Stomach (tissue), 19 donors: ENCODE measurements at regions of chr19 and their contacts with region 1.

Region 1: GRCh38 chr19:14198384-14199376 is 7.3 kb downstream of the ADGRL1 start:
- DNase-seq: no peak
- H3K4me3 ChIP-seq: no peak overlapping the region
- H3K27ac ChIP-seq: no peak overlapping the region
- H3K4me1 ChIP-seq: peaks cover 0 to 42% (median 21%) of the 10 kb centered on the region in 4 donors
- H3K27me3 ChIP-seq: no peaks in the 10 kb centered on the region
- CTCF ChIP-seq: no peak
- EP300 ChIP-seq: no peak
- POLR2A ChIP-seq: no peak

Region 2: GRCh38 chr19:14277608-14278007 is 78.9 kb after region 1 on chr19:
- intact Hi-C with region 1: no loop called
- DNase-seq: no peak
- H3K4me3 ChIP-seq: no peak overlapping the region
- H3K27ac ChIP-seq: no peak overlapping the region
- H3K4me1 ChIP-seq: no peaks in the 10 kb centered on the region
- H3K27me3 ChIP-seq: peaks cover 0 to 39% (median 5%) of the 10 kb centered on the region in 3 donors
- CTCF ChIP-seq: no peak
- EP300 ChIP-seq: no peak
- POLR2A ChIP-seq: no peak

Region 3: GRCh38 chr19:14347999-14348889 is 149.6 kb after region 1 on chr19:
- intact Hi-C with region 1: loop called (anchors 5 kb)
- DNase-seq: peak; percentile 76 to 87
- H3K4me3 ChIP-seq: peak overlapping the region; percentile 23 to 40 (median 33)
- H3K27ac ChIP-seq: no peak overlapping the region
- H3K4me1 ChIP-seq: peaks cover 6 to 13% (median 8%) of the 10 kb centered on the region in 4 donors
- H3K27me3 ChIP-seq: peaks cover 0 to 19% (median 2%) of the 10 kb centered on the region in 3 donors
- CTCF ChIP-seq: peak in 5 of 7 experiments; percentile 79 to 95 (median 93)
- EP300 ChIP-seq: no peak
- POLR2A ChIP-seq: no peak

Region 4: DNA sequence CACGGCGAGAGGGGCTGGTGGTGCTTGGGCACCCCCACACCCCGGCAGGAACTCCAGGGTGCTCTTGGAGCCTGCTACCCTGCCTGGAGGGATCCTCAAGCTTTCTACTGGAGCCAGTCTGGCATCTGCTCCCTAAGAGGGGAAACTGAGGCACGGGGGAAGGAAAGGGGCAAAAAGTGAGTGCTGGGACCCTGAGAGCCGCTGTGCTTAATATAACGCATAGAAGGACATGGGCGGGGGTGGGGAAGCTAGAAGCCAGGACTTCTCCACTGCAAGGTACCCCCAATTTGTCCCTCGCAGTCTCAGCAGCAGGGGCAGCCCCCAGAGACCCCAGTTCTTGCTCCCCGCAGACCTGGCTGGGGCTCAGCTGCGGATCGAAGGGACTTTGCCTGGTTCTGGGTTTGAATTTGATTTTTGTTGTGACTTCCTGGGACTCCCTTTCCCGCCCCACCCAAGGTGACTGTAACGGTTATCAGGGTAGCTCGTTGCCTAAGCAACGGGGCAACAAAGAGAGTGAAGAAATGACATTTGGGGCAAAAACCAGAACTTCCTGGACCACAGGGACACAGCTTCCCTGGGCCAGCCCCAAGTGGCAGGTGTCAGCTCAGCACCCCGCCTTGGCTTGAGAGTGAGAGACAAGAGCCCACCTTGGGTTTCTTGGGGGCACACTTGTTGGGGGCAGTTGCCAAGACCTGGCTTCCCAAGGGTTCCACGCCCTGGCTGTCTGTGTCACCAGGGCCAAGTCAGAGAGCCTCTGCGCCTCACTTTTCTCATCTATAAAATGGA is 183.2 kb after region 1 on chr19:
- intact Hi-C with region 1: no loop called
- DNase-seq: peak; percentile 57 to 89
- H3K4me3 ChIP-seq: peak overlapping the region; percentile 69 to 79 (median 76)
- H3K27ac ChIP-seq: peak overlapping the region; percentile 88 to 96 (median 95)
- H3K4me1 ChIP-seq: peaks cover 19 to 82% (median 63%) of the 10 kb centered on the region in 4 donors
- H3K27me3 ChIP-seq: no peaks in the 10 kb centered on the region
- CTCF ChIP-seq: no peak
- EP300 ChIP-seq: no peak
- POLR2A ChIP-seq: no peak

Region 5: DNA sequence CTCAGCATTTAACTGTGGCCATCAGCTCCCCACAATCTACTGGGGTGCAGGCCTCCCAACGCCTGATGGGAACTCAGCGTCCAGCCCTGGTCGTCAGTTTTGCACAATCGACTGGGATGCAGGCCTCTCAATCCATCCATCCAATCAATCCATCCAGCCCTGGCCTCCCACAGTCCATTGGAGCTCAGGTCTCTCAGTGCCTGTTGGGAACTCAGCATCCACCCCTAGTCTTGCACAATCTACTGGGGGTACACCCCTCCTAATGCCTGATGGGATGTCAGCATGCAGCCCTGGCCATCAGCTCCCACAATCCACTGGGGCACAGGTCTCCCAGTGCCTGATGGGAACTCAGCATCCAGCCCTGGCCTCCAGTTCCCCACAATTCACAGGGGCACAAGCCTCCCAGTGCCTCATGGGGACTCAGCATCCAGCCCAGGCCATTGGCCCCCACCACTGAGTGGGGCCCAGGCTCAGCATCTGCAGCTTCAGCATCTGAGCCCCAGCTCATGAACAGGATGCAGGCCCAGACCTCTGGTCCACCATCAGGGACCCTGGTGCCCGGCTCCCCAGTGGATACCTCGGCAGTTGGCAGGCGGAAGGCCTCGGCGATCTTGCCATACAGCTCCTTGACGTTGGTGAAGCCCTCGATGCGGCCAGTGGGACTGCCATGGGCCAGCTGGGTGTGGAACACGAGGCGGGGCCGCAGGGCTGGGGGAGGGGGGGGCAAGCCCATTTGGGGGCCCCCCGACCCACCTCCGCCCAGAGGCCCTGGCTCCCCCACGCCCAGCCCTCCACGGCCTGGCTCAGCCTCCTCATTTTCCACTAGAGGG is 283.6 kb after region 1 on chr19:
- intact Hi-C with region 1: no loop called
- DNase-seq: no peak
- H3K4me3 ChIP-seq: no peak overlapping the region
- H3K27ac ChIP-seq: no peak overlapping the region
- H3K4me1 ChIP-seq: peaks cover 6 to 22% (median 12%) of the 10 kb centered on the region in 4 donors
- H3K27me3 ChIP-seq: no peaks in the 10 kb centered on the region
- CTCF ChIP-seq: no peak
- EP300 ChIP-seq: no peak
- POLR2A ChIP-seq: no peak